Activated T-helper 1 cell treated with anti-CD3 and anti-CD28 coated beads, Interleukin-12 subunit alpha, Interleukin-12 subunit beta, Interleukin-2, Interleukin-4 antibody, amounts not matched to agents 30 ng/mL and 10 ng/mL and 1 ng/mL, durations not matched to agents 14 hours and 24 hours and 36 hours (primary cell): ENCODE measurements at regions of chr13 and their contacts with region 1.

Region 1: DNA sequence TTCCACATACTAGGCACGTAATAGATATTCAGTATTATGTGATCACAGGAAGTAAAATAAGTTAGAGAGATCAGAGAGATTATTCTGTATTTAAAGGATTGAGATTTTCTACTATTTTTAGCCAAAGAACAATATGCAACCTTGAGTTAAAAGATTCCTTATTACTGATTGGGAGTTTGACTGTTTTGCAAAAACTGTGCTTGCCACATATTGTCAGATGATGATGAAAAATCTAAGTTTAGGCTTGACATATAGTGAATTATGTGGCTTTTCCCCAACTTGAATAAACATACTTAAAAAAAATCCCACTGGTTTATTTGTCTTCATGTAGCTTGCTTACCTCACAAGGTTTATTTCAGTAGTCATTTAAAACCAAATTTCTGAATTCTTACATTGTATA is 194.4 kb downstream of the KCNRG start:
- DNase-seq: no peak
- H3K4me3 Mint-ChIP-seq: no peak overlapping the region
- H3K27ac Mint-ChIP-seq: no peak overlapping the region
- H3K4me1 Mint-ChIP-seq: peaks cover 13% of the 10 kb centered on the region
- H3K27me3 Mint-ChIP-seq: peaks cover 27% of the 10 kb centered on the region

Region 2: DNA sequence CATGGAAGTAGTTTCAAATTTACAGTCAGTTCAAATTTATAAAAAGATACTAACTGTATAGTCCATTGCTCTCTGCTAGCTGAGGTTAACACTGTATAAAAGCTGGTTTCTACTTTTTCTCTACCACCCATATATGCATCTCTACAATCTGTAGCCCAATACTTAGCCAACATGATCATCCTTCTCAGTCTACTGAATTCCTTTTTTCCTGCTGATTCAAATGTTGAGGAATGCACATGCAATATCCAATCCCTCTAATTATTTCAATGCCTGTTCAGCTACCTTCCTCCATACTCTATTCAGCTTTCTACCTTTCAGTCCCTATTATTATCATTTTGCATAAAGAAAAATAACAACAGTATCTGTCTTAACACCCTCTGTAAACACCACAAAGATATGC is 432.8 kb before region 1 on chr13:
- intact Hi-C with region 1: no loop called
- DNase-seq: no peak
- H3K4me3 Mint-ChIP-seq: no peak overlapping the region
- H3K27ac Mint-ChIP-seq: no peak overlapping the region
- H3K4me1 Mint-ChIP-seq: peaks cover 20% of the 10 kb centered on the region
- H3K27me3 Mint-ChIP-seq: no peaks in the 10 kb centered on the region

Region 3: DNA sequence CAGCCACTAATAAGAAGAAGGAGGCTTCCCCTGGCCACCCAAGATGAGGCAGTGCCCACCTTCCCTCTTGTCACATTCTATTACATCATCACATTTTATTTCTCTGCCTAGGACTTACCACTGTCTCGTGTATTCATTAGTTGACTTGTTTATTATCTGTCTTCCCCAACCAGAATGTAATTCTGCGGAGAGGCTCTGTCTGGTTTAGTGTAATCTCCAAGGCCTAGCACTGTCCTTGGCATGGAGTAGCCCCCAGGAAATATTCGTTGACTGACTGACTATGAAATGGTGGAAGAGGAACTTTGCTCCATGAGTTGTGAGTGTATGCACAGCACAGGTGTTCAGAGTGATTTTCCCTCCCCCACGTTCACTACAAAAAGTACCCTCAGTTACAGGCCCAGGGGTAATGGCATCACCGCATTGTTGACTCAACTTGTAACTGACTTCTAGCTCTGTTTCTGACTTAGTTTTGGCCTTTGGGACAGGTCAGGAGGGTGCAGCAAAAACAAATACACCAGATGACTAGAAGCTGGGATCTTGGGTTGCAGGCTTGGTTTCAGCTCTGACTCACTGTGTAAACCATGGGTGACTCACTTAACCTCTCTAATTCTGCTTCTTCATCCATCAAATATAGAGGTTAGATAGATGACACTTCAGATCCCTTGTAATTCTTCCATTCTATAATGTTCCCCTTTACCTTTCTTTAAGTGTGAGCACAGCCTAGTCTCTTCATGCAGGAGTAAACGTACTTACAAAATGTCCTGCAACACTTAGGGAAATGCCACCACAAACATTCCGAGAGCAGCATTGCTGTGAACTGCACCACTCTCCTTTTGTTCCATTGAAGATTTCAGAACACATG is 35.3 kb after region 1 on chr13:
- intact Hi-C with region 1: loop called (anchors 5 kb)
- DNase-seq: peak; percentile 53
- H3K4me3 Mint-ChIP-seq: peak overlapping the region; percentile 20
- H3K27ac Mint-ChIP-seq: peak overlapping the region; percentile 73
- H3K4me1 Mint-ChIP-seq: peaks cover 56% of the 10 kb centered on the region
- H3K27me3 Mint-ChIP-seq: peaks cover 21% of the 10 kb centered on the region

Region 4: GRCh38 chr13:50261130-50261901 is 51.7 kb after region 1 on chr13:
- intact Hi-C with region 1: no loop called
- DNase-seq: no peak
- H3K4me3 Mint-ChIP-seq: no peak overlapping the region
- H3K27ac Mint-ChIP-seq: peak overlapping the region; percentile 30
- H3K4me1 Mint-ChIP-seq: peaks cover 39% of the 10 kb centered on the region
- H3K27me3 Mint-ChIP-seq: peaks cover 46% of the 10 kb centered on the region